Mammary epithelial cell (primary cell): ENCODE measurements at regions of chr15 and their contacts with region 1.

Region 1: DNA sequence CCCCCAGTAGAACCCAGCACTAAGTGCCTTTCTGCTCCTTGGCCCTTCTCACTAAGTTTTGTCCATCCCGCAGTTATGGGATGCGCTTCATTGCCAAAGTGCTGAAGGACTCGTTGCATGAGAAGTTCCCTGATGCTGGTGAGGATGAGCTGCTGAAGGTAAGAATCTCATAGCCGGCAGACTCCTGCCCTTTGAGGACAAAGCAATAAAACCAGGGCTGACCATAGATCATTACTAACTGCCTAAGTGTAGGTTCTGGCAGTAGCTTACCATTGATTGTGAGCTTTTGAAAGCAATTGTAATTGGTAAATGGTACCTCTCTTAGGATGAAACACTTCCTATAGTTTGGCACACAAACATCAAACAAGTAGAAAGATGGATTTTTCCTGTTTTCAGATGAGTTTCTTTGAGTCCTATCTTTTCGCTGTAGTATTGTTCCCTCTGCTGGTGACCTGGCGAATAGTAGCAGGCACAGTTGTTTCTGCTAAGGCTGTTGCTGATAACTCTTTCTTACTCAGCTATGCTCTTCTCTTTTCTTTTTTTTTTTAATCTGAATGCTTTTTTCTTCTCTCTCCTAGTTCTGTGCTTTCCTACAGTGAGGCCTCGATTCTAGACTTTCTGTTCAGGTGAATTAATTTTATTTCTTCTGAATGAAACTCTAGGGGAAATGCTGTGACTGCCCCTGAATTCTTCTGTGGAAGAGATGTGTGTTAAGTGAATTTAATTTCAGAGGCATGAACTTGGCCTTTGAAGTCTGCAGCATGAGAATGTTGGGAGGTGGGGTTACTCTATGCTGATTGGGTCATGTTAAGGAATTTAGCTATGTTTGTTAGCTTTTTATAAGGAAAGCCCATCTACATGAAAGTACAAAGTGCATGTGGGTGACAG is 47.4 kb upstream of the CRTC3 start:
- DNase-seq: no peak
- H3K4me3 ChIP-seq: no peak overlapping the region
- H3K27ac ChIP-seq: no peak overlapping the region
- H3K4me1 ChIP-seq: peaks cover 29% of the 10 kb centered on the region
- H3K27me3 ChIP-seq: no peaks in the 10 kb centered on the region
- CTCF ChIP-seq: peak; percentile 65 to 71

Region 2: DNA sequence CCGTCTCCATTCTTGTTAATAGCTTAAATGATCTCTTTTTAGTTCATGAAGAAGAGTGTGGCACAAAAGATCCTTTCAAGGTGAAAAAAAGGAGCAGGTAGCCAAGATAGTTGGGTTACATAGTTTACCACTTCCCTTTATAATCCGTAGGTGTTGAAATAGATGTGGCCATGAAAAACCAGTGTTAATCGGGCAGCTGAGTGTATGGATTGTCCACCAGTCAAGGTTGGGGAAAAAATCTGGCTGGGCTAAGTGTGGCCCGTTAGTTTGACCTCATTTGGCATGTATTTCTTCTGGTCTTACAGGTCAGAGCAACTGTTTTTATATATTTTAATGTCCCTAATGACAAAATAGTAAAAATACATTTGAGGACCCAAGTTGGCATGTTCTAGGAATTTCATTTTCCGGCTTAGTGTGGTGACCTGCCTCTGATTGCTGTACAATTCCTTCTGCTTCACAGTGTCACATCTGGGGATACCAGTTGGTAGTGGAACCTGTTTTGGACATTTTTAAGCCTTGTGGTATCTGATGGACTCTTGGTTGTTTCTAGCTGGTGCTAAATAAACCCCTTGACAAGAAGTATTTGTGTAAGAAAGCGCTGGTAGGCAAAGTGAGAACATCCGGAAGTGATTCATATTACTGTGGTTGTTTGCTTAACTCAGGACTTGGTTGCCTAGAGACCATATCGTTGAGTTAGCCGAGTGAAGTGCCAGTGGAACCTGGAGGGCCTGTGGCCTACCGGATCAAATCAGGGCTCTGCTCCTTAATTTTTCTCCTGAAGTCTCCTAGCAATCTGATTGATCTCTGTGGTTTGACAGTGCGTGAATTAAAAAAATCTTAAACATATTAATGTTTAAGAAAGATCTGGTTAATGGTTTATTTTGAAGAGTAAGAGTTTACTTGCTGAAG is 81.7 kb before region 1 on chr15:
- CTCF ChIA-PET with region 1: no interaction called
- dilution Hi-C with region 1: no loop called
- in situ Hi-C with region 1: no loop called
- intact Hi-C with region 1: no loop called
- DNase-seq: peak; percentile 91
- H3K4me3 ChIP-seq: peak overlapping the region; percentile 8 to 31 (median 12)
- H3K27ac ChIP-seq: peak overlapping the region; percentile 95
- H3K4me1 ChIP-seq: peaks cover 44% of the 10 kb centered on the region
- H3K27me3 ChIP-seq: no peaks in the 10 kb centered on the region
- CTCF ChIP-seq: no peak

Region 3: DNA sequence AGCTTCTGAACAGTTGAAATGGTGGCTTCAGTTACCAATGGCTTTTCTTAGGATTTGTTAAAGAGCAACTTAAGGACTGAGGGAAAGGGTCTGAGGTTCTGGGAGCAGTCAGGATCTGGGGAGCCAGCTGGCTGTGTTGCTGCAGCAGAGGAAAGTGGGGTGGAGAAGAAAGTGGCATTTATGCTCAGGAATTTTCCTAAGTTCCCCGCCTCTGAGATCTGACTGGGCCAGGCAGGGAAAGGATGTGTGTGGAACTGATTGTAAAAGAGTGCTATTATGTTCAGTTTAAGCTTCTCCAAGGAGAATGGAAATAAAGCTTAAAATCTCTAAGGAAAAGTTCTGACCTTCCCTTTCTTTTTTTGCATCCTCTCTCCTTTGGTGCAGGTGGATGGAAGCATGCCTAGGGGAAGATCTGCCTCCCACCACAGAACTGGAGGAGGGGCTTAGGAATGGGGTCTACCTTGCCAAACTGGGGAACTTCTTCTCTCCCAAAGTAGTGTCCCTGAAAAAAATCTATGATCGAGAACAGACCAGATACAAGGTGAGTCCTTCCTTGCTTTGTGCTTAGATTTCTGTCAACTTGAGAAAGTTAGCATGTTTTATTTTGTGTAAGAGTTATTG is 56.5 kb before region 1 on chr15:
- CTCF ChIA-PET with region 1: no interaction called
- dilution Hi-C with region 1: loop called (anchors 5 kb)
- in situ Hi-C with region 1: no loop called
- intact Hi-C with region 1: no loop called
- DNase-seq: no peak
- H3K4me3 ChIP-seq: no peak overlapping the region
- H3K27ac ChIP-seq: no peak overlapping the region
- H3K4me1 ChIP-seq: peaks cover 20% of the 10 kb centered on the region
- H3K27me3 ChIP-seq: no peaks in the 10 kb centered on the region
- CTCF ChIP-seq: no peak